T-cell (primary cell): ENCODE measurements at regions of chr10 and their contacts with region 1.

Region 1: DNA sequence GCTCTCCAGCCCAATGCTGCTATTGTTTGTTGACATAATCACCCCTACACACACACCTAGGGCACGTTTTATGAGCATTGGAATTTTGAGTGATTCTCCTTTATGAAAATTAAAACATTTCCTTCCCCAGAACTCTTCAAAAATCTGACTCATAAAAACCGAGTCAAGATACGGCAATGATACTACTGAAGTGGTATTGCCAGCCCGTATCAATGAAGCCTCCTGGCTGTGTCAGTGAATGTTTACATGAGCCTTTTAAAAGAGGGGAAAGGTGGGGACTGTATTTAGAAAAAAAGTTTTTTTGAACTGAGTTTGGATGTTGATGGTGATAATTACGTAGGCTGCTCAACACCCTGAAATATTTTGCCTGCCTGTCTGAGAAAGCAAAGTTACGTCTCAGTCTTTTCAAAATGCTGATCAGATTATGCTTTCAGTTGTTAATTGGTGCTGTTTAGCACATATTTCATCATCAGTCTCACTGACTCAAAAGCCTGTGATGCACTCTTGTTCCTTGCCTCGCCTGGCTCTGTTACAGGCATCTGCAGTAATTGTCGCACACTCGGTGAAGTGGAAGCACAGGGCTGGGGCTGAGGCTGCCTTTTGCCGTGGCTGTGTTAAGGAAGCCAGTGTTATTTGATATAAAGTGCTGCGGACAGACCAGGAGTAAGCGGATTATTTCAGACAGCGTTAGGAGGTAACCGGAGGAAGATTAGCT is 157.4 kb upstream of the TCF7L2 start:
- DNase-seq: no peak
- ATAC-seq: no peak
- H3K4me3 ChIP-seq: no peak overlapping the region
- H3K4me3 Mint-ChIP-seq: no peak overlapping the region
- H3K27ac ChIP-seq: no peak overlapping the region
- H3K27ac Mint-ChIP-seq: no peak overlapping the region
- H3K4me1 ChIP-seq: no peaks in the 10 kb centered on the region
- H3K4me1 Mint-ChIP-seq: no peaks in the 10 kb centered on the region
- H3K27me3 ChIP-seq: no peaks in the 10 kb centered on the region
- H3K27me3 Mint-ChIP-seq: no peaks in the 10 kb centered on the region

Region 2: DNA sequence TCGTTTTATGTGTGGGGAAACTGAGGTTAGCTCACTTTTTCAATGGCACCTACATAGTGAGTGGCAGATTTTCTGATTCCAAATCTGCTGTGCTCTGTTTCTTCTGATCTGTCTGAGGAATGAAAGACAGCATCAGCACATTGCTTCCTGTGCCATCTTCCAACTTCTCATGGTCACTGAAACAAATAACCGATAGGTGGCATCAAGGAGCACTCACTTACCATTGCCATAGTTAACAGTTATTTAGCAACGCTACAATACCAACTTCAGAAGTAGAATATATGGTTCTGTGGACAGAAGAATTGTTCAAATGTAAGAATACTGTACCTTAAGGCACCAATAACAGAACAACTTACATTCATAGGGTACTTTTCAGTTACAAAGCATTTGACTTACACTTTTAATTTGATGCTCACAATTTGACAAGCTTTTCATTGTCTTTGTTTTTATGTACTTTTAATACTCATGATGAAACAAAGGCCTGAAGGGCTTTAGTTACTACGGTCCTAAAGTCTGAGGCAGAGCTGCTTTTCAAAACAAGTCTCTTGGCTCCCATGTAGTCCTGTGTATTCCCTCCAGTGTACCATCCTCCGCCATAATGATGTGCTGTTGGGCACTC is 71.5 kb before region 1 on chr10:
- CTCF ChIA-PET with region 1: no interaction called
- POLR2A ChIA-PET with region 1: interaction called in 1 of 2 experiments, 12 read pairs
- DNase-seq: peak in 6 of 35 experiments; percentile 1 to 58 (median 6)
- ATAC-seq: peak in 1 of 4 experiments; percentile 57
- H3K4me3 ChIP-seq: no peak overlapping the region
- H3K4me3 Mint-ChIP-seq: no peak overlapping the region
- H3K27ac ChIP-seq: no peak overlapping the region
- H3K27ac Mint-ChIP-seq: no peak overlapping the region
- H3K4me1 ChIP-seq: no peaks in the 10 kb centered on the region
- H3K4me1 Mint-ChIP-seq: no peaks in the 10 kb centered on the region
- H3K27me3 ChIP-seq: no peaks in the 10 kb centered on the region
- H3K27me3 Mint-ChIP-seq: no peaks in the 10 kb centered on the region

Region 3: GRCh38 chr10:113060201-113061053 is 267.8 kb after region 1 on chr10:
- CTCF ChIA-PET with region 1: no interaction called
- POLR2A ChIA-PET with region 1: interaction called in 1 of 2 experiments, 10 read pairs
- DNase-seq: peak in 2 of 35 experiments; percentile 1 to 14
- ATAC-seq: peak in 2 of 4 experiments; percentile 33 to 43
- H3K4me3 ChIP-seq: peak overlapping the region in 1 of 2 donors; percentile 50
- H3K4me3 Mint-ChIP-seq: no peak overlapping the region
- H3K27ac ChIP-seq: no peak overlapping the region
- H3K27ac Mint-ChIP-seq: no peak overlapping the region
- H3K4me1 ChIP-seq: peaks cover 6 to 15% of the 10 kb centered on the region in 2 experiments
- H3K4me1 Mint-ChIP-seq: peaks cover 0 to 5% (median 2%) of the 10 kb centered on the region in 3 donors
- H3K27me3 ChIP-seq: no peaks in the 10 kb centered on the region
- H3K27me3 Mint-ChIP-seq: no peaks in the 10 kb centered on the region